Activated naive CD4-positive, alpha-beta T cell treated with anti-CD3 and anti-CD28 coated beads for 36 hours (primary cell): ENCODE measurements at regions of chrX and their contacts with region 1.

Region 1: DNA sequence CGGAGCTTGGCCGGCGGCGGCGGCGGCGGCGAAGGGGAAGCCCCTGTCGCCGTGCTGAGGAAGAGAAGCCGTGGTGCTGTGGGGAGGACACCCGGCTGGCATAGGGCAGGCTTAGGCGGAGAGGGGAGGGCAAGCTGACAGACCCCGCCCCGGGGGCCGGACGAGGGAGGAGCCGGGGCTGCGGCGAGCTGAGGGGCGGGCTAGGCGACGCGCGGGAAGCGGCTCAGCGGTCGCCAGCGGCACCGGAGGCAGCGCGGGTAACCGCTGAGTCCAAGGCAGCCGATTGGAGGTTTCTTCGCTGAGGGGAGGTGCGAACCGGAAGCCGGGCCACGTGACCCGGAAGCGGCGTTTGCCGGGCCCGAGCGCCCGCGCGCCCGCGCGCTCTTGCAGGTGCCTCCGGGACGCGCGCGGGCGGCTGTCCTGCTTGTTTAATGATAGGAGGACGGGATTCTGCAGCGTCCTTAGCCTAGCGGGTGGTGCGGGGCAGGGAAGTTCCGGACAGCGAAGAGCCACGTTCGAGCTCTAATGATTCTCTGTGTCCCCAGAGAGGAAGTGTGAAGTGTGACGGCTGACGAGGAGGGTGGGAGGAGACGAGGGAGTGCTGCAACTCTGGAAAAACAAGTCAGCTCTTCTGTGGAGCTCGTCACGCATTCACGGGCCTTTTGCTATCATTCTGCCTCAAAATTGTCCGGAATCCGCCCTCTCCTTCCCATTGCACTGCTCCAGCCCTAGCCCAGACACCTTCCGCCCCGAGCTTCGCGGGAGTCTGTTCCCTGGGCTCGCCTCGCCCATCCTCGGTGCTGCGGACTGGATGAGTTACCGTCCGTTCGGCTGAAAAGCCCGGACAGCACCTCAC is at the start of gene AP1S2:
- DNase-seq: peak; percentile 91
- H3K4me3 Mint-ChIP-seq: peak within 1 kb of the TSS; percentile 88
- H3K27ac Mint-ChIP-seq: peak within 1 kb of the TSS; percentile 95
- H3K4me1 Mint-ChIP-seq: peaks cover 20% of the 10 kb centered on the region
- H3K27me3 Mint-ChIP-seq: no peaks in the 10 kb centered on the region
- total RNA-seq, gene AP1S2: 17.4 to 18.0 TPM

Region 2: GRCh38 chrX:15335135-15336022 is 519.6 kb before region 1 on chrX and contains the start of gene PIGA:
- CTCF ChIA-PET with region 1: no interaction called
- intact Hi-C with region 1: loop called (anchors 1 kb)
- DNase-seq: peak; percentile 94
- H3K4me3 Mint-ChIP-seq: peak within 1 kb of the TSS; percentile 89
- H3K27ac Mint-ChIP-seq: peak within 1 kb of the TSS; percentile 87
- H3K4me1 Mint-ChIP-seq: peaks cover 12% of the 10 kb centered on the region
- H3K27me3 Mint-ChIP-seq: no peaks in the 10 kb centered on the region
- total RNA-seq, gene PIGA: 26.8 to 28.4 TPM

Region 3: GRCh38 chrX:15737960-15738902 is 116.7 kb before region 1 on chrX and contains the start of gene CA5B:
- CTCF ChIA-PET with region 1: no interaction called
- intact Hi-C with region 1: loop called (anchors 1 kb)
- DNase-seq: peak; percentile 96
- H3K4me3 Mint-ChIP-seq: peak within 1 kb of the TSS; percentile 83
- H3K27ac Mint-ChIP-seq: no peak within 1 kb of the TSS
- H3K4me1 Mint-ChIP-seq: peaks cover 37% of the 10 kb centered on the region
- H3K27me3 Mint-ChIP-seq: no peaks in the 10 kb centered on the region
- total RNA-seq, gene CA5B: 7.0 to 9.5 TPM

Region 4: GRCh38 chrX:15789979-15790768 is 64.8 kb before region 1 on chrX and contains the start of gene ZRSR2:
- CTCF ChIA-PET with region 1: no interaction called
- intact Hi-C with region 1: loop called (anchors 1 kb)
- DNase-seq: peak; percentile 88
- H3K4me3 Mint-ChIP-seq: no peak within 1 kb of the TSS
- H3K27ac Mint-ChIP-seq: no peak within 1 kb of the TSS
- H3K4me1 Mint-ChIP-seq: peaks cover 16% of the 10 kb centered on the region
- H3K27me3 Mint-ChIP-seq: no peaks in the 10 kb centered on the region
- total RNA-seq, gene ZRSR2: 15.7 to 16.7 TPM

Region 5: DNA sequence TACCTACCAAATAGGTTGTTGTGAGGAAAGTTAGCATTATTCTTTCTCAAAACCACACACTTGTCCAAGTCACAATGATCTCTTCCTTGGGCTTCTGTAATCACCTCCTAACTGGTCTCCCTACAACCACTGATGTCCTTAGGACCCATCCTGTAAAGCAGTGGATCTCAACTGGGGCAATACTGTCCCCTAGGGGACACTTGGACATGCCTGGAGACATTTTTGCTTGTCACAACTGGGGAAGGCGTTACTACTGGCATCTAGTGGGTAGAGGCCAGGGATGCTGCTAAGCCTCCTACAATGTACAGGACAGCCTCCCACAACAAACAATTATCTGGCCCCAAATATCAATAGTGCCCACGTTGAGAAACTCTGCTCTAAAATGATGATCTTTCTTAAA is 118.4 kb after region 1 on chrX:
- CTCF ChIA-PET with region 1: no interaction called
- intact Hi-C with region 1: loop called (anchors 2 kb)
- DNase-seq: peak; percentile 39
- H3K4me3 Mint-ChIP-seq: no peak overlapping the region
- H3K27ac Mint-ChIP-seq: no peak overlapping the region
- H3K4me1 Mint-ChIP-seq: peaks cover 6% of the 10 kb centered on the region
- H3K27me3 Mint-ChIP-seq: no peaks in the 10 kb centered on the region

Region 6: GRCh38 chrX:16123222-16123786 is 268.4 kb after region 1 on chrX and contains the start of gene GRPR:
- CTCF ChIA-PET with region 1: no interaction called
- intact Hi-C with region 1: loop called (anchors 5 kb)
- DNase-seq: peak; percentile 73
- H3K4me3 Mint-ChIP-seq: no peak within 1 kb of the TSS
- H3K27ac Mint-ChIP-seq: no peak within 1 kb of the TSS
- H3K4me1 Mint-ChIP-seq: peaks cover 22% of the 10 kb centered on the region
- H3K27me3 Mint-ChIP-seq: peaks cover 4% of the 10 kb centered on the region
- total RNA-seq, gene GRPR: not detected

Region 7: DNA sequence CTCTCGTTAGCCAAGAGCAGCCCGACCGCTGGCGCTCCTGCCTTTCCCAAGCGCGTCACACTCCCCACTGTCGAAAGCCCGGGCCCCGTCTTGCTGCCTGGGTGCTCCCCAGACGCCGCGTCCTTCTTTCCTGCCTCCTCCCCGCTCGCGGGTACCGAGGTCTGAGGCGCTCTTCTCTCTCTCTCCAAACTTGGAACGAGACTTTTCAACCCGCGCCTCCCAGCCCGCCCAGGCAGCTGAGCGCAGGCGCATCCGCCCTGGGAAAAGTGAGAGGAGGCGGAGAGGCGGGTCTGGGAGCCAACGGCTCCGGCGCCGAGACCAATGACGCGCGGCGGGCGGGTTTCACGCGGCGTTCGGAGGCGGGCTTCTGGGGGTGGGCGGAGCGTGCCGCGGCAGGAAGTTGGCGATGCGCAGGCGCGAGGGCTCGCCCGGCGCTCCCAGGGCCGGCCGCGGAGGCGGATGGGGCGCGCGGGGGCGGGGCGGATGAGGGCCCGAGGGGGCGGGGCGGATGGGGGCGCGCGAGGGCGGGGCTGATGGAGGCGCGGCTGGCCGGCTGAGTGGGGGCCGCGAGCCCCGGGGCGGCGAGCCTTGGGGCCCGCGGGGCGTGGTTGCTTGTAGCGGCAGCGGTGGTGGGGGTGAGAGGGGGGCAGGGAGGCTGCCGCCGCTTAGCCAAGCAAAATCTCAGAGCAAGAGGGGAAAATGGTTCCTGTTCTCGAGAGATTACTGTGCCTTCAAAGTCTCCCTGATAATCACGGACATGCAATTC is 1015.3 kb after region 1 on chrX and contains the start of gene RBBP7:
- CTCF ChIA-PET with region 1: no interaction called
- intact Hi-C with region 1: loop called (anchors 10 kb)
- DNase-seq: peak; percentile 91
- H3K4me3 Mint-ChIP-seq: peak within 1 kb of the TSS; percentile 96
- H3K27ac Mint-ChIP-seq: peak within 1 kb of the TSS; percentile 98
- H3K4me1 Mint-ChIP-seq: peaks cover 25% of the 10 kb centered on the region
- H3K27me3 Mint-ChIP-seq: no peaks in the 10 kb centered on the region
- total RNA-seq, gene RBBP7: 213 to 228 TPM